ENCODE measurements at regions of chr11 and their contacts with region 1.

Region 1: GRCh38 chr11:78270971-78271370 is 82.3 kb downstream of the USP35 start:
- DNase-seq: no peak
- H3K4me3 ChIP-seq: no peak overlapping the region
- H3K4me3 Mint-ChIP-seq: no peak overlapping the region
- H3K27ac ChIP-seq: peak overlapping the region in 1 of 2 donors; percentile 37
- H3K27ac Mint-ChIP-seq: peak overlapping the region in 1 of 7 donors; percentile 57
- H3K4me1 ChIP-seq: peaks cover 3 to 8% of the 10 kb centered on the region in 2 donors
- H3K4me1 Mint-ChIP-seq: peaks cover 16% of the 10 kb centered on the region
- H3K27me3 ChIP-seq: no peaks in the 10 kb centered on the region
- H3K27me3 Mint-ChIP-seq: peaks cover 0 to 3% (median 0%) of the 10 kb centered on the region in 3 donors
- CTCF ChIP-seq: no peak

Region 2: DNA sequence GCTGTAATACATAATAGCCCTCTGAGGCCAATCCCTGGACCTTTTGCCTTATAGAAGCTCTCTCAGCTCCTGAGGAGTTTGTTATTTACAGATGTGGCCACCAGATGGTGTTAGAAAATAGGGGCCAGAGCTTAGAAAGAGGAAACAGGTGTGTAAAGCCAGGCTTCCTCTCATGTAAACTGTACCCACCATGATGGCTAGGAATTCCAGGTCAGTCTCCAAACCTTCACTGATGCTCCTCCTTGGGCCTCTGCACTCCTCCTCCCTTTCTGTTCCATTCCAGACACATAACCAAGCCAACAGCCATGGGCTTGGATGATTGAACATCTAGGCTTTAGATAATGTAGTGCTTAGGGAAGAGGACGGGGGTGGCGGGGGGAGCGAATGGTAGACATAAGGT is 42.5 kb before region 1 on chr11:
- intact Hi-C with region 1: loop called in 1 of 2 experiments (anchors 5 kb)
- DNase-seq: peak; percentile 48 to 60 (median 56)
- H3K4me3 ChIP-seq: no peak overlapping the region
- H3K4me3 Mint-ChIP-seq: no peak overlapping the region
- H3K27ac ChIP-seq: peak overlapping the region in 1 of 2 donors; percentile 23
- H3K27ac Mint-ChIP-seq: peak overlapping the region in 2 of 7 donors; percentile 55 to 71
- H3K4me1 ChIP-seq: peaks cover 8 to 9% of the 10 kb centered on the region in 2 donors
- H3K4me1 Mint-ChIP-seq: peaks cover 37% of the 10 kb centered on the region
- H3K27me3 ChIP-seq: no peaks in the 10 kb centered on the region
- H3K27me3 Mint-ChIP-seq: no peaks in the 10 kb centered on the region
- CTCF ChIP-seq: peak; percentile 68

Region 3: DNA sequence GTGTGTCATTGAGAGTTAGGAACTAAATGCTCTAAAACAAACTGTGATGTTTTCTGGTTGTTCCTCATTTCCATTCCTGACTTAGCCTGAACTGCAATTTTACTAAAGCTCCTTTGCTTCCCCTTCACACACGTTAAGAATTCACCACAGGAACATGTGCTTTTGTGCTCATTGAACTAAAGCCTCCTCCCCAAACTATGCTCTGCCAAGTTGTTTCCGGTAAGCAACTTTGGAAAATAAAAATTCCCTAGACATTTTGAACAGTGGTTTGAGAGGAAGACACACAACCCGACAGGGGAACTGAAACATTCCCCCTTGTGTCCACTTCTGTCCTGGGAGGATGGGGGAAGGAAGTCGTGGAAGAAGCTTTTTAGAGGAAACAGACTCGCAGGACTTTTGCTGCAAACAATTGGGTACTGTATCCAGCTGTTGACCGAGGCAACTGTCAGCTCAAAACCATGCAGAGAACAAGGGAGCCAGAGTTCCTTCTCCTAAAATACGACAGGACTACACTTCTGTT is 79.7 kb after region 1 on chr11:
- intact Hi-C with region 1: no loop called
- DNase-seq: peak; percentile 57 to 68 (median 65)
- H3K4me3 ChIP-seq: peak overlapping the region; percentile 19 to 70 (median 37)
- H3K4me3 Mint-ChIP-seq: peak overlapping the region; percentile 69 to 86
- H3K27ac ChIP-seq: peak overlapping the region; percentile 67 to 92
- H3K27ac Mint-ChIP-seq: peak overlapping the region; percentile 93 to 98 (median 96)
- H3K4me1 ChIP-seq: peaks cover 80 to 84% of the 10 kb centered on the region in 2 donors
- H3K4me1 Mint-ChIP-seq: peaks cover 92% of the 10 kb centered on the region
- H3K27me3 ChIP-seq: no peaks in the 10 kb centered on the region
- H3K27me3 Mint-ChIP-seq: peaks cover 0 to 1% (median 0%) of the 10 kb centered on the region in 3 donors
- CTCF ChIP-seq: no peak